ENCODE measurements at regions of chr6 and their contacts with region 1.

Region 1: GRCh38 chr6:125956506-125957390 is at the start of gene HINT3:
- DNase-seq: peak; percentile 98 to 99
- ATAC-seq: peak; percentile 97 to 98 (median 98)
- H3K4me3 ChIP-seq: peak within 1 kb of the TSS; percentile 70 to 100 (median 84)
- H3K27ac ChIP-seq: peak within 1 kb of the TSS; percentile 85 to 97 (median 94)
- H3K4me1 ChIP-seq: peaks cover 0 to 30% (median 24%) of the 10 kb centered on the region in 9 donors
- H3K27me3 ChIP-seq: no peaks in the 10 kb centered on the region
- CTCF ChIP-seq: peak; percentile 94 to 100 (median 99)
- total RNA-seq, gene HINT3: 29.8 to 41.6 (median 33.8) TPM

Region 2: GRCh38 chr6:125779924-125780539 is 176.7 kb before region 1 on chr6:
- intact Hi-C with region 1: loop called in 7 of 10 experiments (anchors 2 to 10 kb)
- DNase-seq: peak; percentile 81 to 88
- ATAC-seq: peak; percentile 95 to 99 (median 98)
- H3K4me3 ChIP-seq: peak overlapping the region; percentile 31 to 83 (median 64)
- H3K27ac ChIP-seq: peak overlapping the region; percentile 75 to 95 (median 94)
- H3K4me1 ChIP-seq: peaks cover 0 to 18% (median 7%) of the 10 kb centered on the region in 9 donors
- H3K27me3 ChIP-seq: no peaks in the 10 kb centered on the region
- CTCF ChIP-seq: peak in 7 of 9 donors; percentile 29 to 55 (median 43)

Region 3: GRCh38 chr6:125858427-125859320 is 98.1 kb before region 1 on chr6:
- intact Hi-C with region 1: loop called in 4 of 10 experiments (anchors 1 to 10 kb)
- DNase-seq: peak in 1 of 2 donors; percentile 53
- ATAC-seq: peak in 7 of 8 donors; percentile 75 to 90 (median 85)
- H3K4me3 ChIP-seq: no peak overlapping the region
- H3K27ac ChIP-seq: no peak overlapping the region
- H3K4me1 ChIP-seq: peaks cover 0 to 6% (median 2%) of the 10 kb centered on the region in 9 donors
- H3K27me3 ChIP-seq: no peaks in the 10 kb centered on the region
- CTCF ChIP-seq: peak; percentile 26 to 79 (median 68)

Region 4: GRCh38 chr6:125906158-125906998 is 50.4 kb before region 1 on chr6:
- intact Hi-C with region 1: loop called in 2 of 10 experiments (anchors 5 to 10 kb)
- DNase-seq: peak; percentile 16 to 37
- ATAC-seq: peak in 2 of 8 donors; percentile 39 to 55
- H3K4me3 ChIP-seq: no peak overlapping the region
- H3K27ac ChIP-seq: no peak overlapping the region
- H3K4me1 ChIP-seq: peaks cover 0 to 22% (median 0%) of the 10 kb centered on the region in 9 donors
- H3K27me3 ChIP-seq: no peaks in the 10 kb centered on the region
- CTCF ChIP-seq: peak in 8 of 9 donors; percentile 40 to 83 (median 56)

Measured in heart right ventricle (tissue), 16 donors.